CD4-positive, alpha-beta T cell (primary cell): ENCODE measurements at regions of chr17 and their contacts with region 1.

Region 1: GRCh38 chr17:55446581-55447205 is 25.1 kb upstream of the MMD start:
- DNase-seq: no peak
- ATAC-seq: no peak
- H3K4me3 ChIP-seq: no peak overlapping the region
- H3K4me3 Mint-ChIP-seq: no peak overlapping the region
- H3K27ac ChIP-seq: no peak overlapping the region
- H3K27ac Mint-ChIP-seq: no peak overlapping the region
- H3K4me1 ChIP-seq: no peaks in the 10 kb centered on the region
- H3K4me1 Mint-ChIP-seq: peaks cover 5% of the 10 kb centered on the region
- H3K27me3 ChIP-seq: no peaks in the 10 kb centered on the region
- H3K27me3 Mint-ChIP-seq: peaks cover 4% of the 10 kb centered on the region
- CTCF ChIP-seq: no peak

Region 2: GRCh38 chr17:55320594-55321426 is 125.9 kb before region 1 on chr17:
- CTCF ChIA-PET with region 1: no interaction called
- POLR2A ChIA-PET with region 1: no interaction called
- intact Hi-C with region 1: no loop called
- DNase-seq: no peak
- ATAC-seq: no peak
- H3K4me3 ChIP-seq: no peak overlapping the region
- H3K4me3 Mint-ChIP-seq: no peak overlapping the region
- H3K27ac ChIP-seq: no peak overlapping the region
- H3K27ac Mint-ChIP-seq: no peak overlapping the region
- H3K4me1 ChIP-seq: no peaks in the 10 kb centered on the region
- H3K4me1 Mint-ChIP-seq: no peaks in the 10 kb centered on the region
- H3K27me3 ChIP-seq: no peaks in the 10 kb centered on the region
- H3K27me3 Mint-ChIP-seq: no peaks in the 10 kb centered on the region
- CTCF ChIP-seq: no peak

Region 3: DNA sequence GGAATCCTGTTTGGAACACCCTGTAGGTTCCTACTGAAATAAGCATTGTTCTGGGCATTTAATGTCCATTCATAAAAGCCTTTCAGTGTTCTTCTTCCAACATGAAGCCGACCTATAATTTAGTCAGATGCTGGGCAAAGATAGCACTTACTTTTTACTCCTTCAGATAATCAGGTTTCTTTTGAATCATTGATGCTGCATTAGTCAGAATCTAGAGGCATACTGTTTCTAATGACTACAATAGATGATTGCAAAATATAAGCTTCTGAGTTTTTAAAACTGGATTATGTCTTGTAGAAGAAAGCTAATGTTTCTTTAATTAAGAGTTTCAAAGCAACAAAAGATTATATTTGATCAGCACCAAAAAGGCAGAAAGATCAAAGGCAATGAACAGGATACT is 41.1 kb before region 1 on chr17:
- CTCF ChIA-PET with region 1: no interaction called
- POLR2A ChIA-PET with region 1: no interaction called
- intact Hi-C with region 1: loop called in 1 of 2 experiments (anchors 2 kb)
- DNase-seq: no peak
- ATAC-seq: no peak
- H3K4me3 ChIP-seq: no peak overlapping the region
- H3K4me3 Mint-ChIP-seq: no peak overlapping the region
- H3K27ac ChIP-seq: no peak overlapping the region
- H3K27ac Mint-ChIP-seq: no peak overlapping the region
- H3K4me1 ChIP-seq: no peaks in the 10 kb centered on the region
- H3K4me1 Mint-ChIP-seq: no peaks in the 10 kb centered on the region
- H3K27me3 ChIP-seq: no peaks in the 10 kb centered on the region
- H3K27me3 Mint-ChIP-seq: no peaks in the 10 kb centered on the region
- CTCF ChIP-seq: no peak